Activated CD8-positive, alpha-beta T cell treated with anti-CD3 and anti-CD28 coated beads, Interleukin-2, amount 10 ng/mL, durations not matched to agents 7 days and 5 days (primary cell): ENCODE measurements at regions of chr14 and their contacts with region 1.

Region 1: DNA sequence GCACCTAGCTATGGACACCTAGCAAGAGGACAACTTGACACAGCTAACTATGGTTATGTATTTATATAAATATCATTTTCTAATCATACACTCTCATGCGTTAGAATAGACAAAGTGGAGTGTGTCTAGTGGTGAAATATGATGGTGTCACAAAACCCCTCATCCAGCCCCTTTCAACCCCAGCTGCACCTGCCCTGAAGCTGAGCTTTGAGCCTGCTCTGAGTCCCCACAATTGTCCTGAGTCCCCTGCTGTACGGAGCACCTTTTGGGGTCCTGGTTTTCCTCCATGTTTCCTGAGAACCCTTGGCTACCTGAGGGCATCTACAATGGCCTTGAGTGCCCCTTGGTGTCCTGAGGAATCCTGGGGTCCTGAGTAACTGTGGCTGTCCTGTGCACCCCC is 1072.8 kb downstream of the TMEM121 start:
- DNase-seq: no peak
- ATAC-seq: no peak
- H3K4me3 Mint-ChIP-seq: no peak overlapping the region
- H3K27ac Mint-ChIP-seq: no peak overlapping the region
- H3K4me1 Mint-ChIP-seq: no peaks in the 10 kb centered on the region
- H3K27me3 Mint-ChIP-seq: peaks cover 56% of the 10 kb centered on the region

Region 2: DNA sequence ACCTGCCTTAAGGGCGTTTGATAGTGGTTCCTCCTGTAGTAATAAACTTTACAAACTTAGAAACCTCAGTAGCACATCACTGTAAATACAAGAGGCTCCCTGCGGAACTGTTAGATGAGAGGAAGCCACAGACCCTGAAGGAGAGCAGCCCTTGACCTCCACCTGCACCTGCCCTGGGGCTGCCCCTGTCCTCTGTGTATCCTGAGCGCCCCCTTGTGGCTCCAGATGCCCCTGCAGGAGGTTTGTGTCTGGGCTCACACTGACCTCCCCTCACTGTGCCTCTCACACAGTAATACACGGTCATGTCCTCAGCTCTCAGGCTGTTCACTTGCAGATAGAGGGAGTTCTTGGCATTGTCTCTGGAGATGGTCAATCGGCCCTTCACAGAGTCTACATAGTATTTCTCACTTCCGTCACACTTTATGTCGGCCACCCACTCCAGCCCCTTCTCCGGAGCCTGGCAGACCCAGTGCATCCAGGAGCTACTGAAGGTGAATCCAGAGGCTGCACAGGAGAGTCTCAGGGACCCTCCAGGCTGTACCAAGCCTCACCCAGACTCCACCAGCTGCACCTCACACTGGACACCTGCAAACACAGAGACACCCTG is 13.0 kb before region 1 on chr14:
- CTCF ChIA-PET with region 1: interaction called, 24 read pairs
- POLR2A ChIA-PET with region 1: no interaction called
- DNase-seq: peak; percentile 78
- ATAC-seq: peak; percentile 87
- H3K4me3 Mint-ChIP-seq: no peak overlapping the region
- H3K27ac Mint-ChIP-seq: no peak overlapping the region
- H3K4me1 Mint-ChIP-seq: peaks cover 17% of the 10 kb centered on the region
- H3K27me3 Mint-ChIP-seq: peaks cover 27% of the 10 kb centered on the region